Posterior vena cava (tissue), 2 donors: ENCODE measurements at regions of chr7 and their contacts with region 1.

Region 1: GRCh38 chr7:80288175-80289122 is 153.8 kb downstream of the GNAI1 start:
- DNase-seq: no peak

Region 2: GRCh38 chr7:80134536-80135320 is 153.7 kb before region 1 on chr7 and contains the start of gene GNAI1:
- intact Hi-C with region 1: loop called in 1 of 2 experiments (anchors 10 kb)
- DNase-seq: peak; percentile 90
- total RNA-seq, gene GNAI1: 36.1 to 53.7 TPM